PC-9 (cell line): ENCODE measurements at regions of chr14 and their contacts with region 1.

Region 1: DNA sequence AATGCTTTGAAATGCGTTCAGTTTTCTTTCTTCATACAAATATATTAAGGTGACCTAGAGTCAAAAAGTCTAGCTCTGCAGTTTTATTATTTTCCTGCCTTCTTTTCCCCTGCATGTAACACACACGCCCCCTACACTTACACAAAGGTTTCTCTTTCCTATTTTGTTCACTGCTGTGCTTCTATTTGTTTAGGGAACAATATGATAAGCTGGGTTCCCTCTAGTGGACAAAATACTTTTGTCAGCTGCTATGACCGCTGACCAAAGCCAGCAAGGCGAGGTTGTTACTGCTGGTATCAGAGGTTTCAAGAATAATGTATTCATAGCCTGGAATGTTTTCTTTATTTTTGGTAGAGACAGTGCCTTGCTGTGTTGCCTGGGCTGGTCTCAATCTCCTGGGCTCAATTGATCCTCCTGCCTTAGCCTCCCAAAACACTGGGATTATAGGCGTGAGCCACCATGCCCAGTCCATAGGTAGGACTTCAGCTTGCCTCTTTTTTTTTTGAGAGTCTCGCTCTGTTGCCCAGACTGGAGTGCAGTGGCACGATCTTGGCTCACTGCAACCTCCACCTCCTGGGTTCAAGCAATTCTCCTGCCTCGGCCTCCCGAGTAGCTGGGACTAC is 33.4 kb downstream of the FNTB start:
- DNase-seq: peak; percentile 47 to 83
- H3K4me3 ChIP-seq: no peak overlapping the region
- H3K27ac ChIP-seq: peak overlapping the region; percentile 30; the same call in 1 of the 2 replicates
- H3K4me1 ChIP-seq: peaks cover 5% of the 10 kb centered on the region; the same call in 1 of the 2 replicates
- H3K27me3 ChIP-seq: no peaks in the 10 kb centered on the region
- CTCF ChIP-seq: peak; percentile 88

Region 2: DNA sequence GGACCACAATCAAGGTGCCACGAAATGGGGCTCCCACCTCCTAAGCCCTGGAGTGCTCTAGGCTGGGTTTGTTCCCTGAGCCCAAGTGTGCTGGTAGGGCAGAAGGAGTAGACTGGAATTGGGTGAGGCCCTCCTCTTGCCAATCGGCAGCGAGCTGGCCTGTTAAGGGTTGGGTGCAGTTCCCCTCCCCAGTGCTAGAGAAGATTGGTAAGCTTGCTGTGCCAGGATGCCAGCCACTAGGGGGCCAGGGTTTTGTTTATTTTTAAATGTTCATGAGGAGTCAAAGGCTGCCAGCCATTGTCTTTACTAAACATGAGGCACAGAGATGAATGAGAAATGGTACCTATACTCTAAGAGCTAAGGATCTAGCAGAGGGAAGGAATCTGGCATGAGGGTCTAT is 220.1 kb before region 1 on chr14:
- CTCF ChIA-PET with region 1: no interaction called
- POLR2A ChIA-PET with region 1: no interaction called
- intact Hi-C with region 1: loop called (anchors 2 kb)
- DNase-seq: peak in 1 of 2 experiments; percentile 42
- H3K4me3 ChIP-seq: no peak overlapping the region
- H3K27ac ChIP-seq: no peak overlapping the region
- H3K4me1 ChIP-seq: peaks cover 9% of the 10 kb centered on the region
- H3K27me3 ChIP-seq: no peaks in the 10 kb centered on the region
- CTCF ChIP-seq: peak; percentile 81

Region 3: DNA sequence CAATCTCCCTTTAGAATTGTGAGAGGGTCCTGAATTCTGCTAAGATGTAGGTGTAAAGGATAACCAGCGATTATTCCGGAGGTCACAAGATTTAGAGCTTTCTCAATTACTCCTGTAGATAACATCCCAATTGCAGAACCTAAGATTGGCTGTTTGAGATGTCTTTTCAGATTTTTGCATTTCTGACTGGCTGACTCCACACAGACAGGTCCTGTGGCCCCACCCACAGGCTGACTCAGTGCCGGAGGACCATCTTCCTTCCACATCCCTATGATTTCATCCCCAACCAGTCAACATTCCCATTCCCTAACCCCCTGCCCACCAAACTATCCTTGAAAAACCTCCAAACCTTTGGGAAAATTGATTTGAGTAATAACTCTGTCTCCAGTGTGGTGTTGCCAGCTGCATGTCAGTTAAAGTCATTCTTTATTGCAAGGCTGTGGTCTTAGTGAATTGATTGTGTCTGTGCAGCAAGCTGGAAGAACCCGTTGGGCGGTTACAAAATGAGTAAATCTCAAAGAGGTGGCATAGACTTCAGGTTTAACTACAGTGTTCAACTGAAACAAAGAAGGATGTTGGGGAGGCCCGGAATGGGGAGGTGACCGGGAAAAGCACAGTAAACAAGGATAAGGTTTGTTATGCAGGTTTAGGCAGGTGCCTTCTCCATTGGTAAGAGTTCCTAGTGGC is 22.8 kb before region 1 on chr14:
- CTCF ChIA-PET with region 1: interaction called, 29 read pairs
- POLR2A ChIA-PET with region 1: no interaction called
- intact Hi-C with region 1: no loop called
- DNase-seq: peak; percentile 74 to 94
- H3K4me3 ChIP-seq: peak overlapping the region; percentile 31; the same call in 1 of the 2 replicates
- H3K27ac ChIP-seq: peak overlapping the region; percentile 98
- H3K4me1 ChIP-seq: peaks cover 46% of the 10 kb centered on the region
- H3K27me3 ChIP-seq: no peaks in the 10 kb centered on the region
- CTCF ChIP-seq: no peak

Region 4: DNA sequence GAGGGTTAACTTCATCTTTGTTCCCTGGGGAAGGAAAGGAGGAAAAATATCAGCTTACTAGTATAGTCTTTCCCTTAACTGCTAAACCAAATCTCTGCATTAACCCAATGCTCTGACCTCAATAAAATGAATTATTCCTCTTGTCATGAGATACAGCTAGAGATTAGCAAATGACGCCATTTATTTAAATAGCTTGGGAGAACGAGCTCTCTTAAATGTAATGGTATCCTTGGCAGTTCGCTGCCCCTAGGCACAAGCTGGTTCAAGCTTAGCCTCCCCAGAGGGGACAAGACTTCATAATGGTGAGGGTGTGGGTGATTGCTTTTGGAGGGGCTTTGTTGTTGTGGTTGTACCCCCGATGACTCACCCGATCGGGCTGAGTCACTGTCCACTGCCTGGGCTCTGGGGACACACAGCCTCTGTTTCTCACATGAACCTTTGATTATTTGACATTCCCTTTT is 13.8 kb before region 1 on chr14:
- CTCF ChIA-PET with region 1: interaction called, 29 read pairs
- POLR2A ChIA-PET with region 1: interaction called, 3 read pairs
- intact Hi-C with region 1: no loop called
- DNase-seq: peak; percentile 40 to 41
- H3K4me3 ChIP-seq: no peak overlapping the region
- H3K27ac ChIP-seq: peak overlapping the region; percentile 44
- H3K4me1 ChIP-seq: peaks cover 27% of the 10 kb centered on the region
- H3K27me3 ChIP-seq: no peaks in the 10 kb centered on the region
- CTCF ChIP-seq: no peak

Region 5: GRCh38 chr14:65281991-65282895 is 262.2 kb after region 1 on chr14:
- CTCF ChIA-PET with region 1: no interaction called
- POLR2A ChIA-PET with region 1: no interaction called
- intact Hi-C with region 1: no loop called
- DNase-seq: peak in 1 of 2 experiments; percentile 37
- H3K4me3 ChIP-seq: no peak overlapping the region
- H3K27ac ChIP-seq: no peak overlapping the region
- H3K4me1 ChIP-seq: peaks cover 20% of the 10 kb centered on the region
- H3K27me3 ChIP-seq: no peaks in the 10 kb centered on the region
- CTCF ChIP-seq: no peak

Region 6: DNA sequence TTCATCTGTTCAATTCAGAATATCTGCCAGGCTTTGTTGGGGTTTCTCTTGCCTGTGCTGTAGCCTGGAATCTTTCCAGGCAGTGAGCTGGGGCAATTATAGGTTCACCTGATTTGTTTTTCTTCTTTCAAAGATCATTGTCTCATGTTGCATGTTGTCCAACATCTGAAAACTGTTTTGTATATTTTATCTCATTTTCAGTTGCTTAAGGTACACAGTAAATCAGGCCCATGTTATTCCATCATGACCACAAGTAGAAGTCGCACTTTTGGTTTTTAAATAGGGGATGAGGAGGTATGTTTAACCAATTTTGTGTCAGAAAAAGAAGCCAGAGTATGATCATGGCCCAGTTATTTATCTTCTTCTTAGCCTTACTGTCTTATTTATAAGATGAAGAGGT is 367.6 kb after region 1 on chr14:
- CTCF ChIA-PET with region 1: no interaction called
- POLR2A ChIA-PET with region 1: interaction called, 15 read pairs
- intact Hi-C with region 1: no loop called
- DNase-seq: no peak
- H3K4me3 ChIP-seq: no peak overlapping the region
- H3K27ac ChIP-seq: no peak overlapping the region
- H3K4me1 ChIP-seq: 0 out of 2 replicates have a peak, but pooled peaks cover 7% of the 10 kb centered on the region
- H3K27me3 ChIP-seq: no peaks in the 10 kb centered on the region
- CTCF ChIP-seq: no peak